ENCODE measurements at regions of chr17 and their contacts with region 1.

Region 1: DNA sequence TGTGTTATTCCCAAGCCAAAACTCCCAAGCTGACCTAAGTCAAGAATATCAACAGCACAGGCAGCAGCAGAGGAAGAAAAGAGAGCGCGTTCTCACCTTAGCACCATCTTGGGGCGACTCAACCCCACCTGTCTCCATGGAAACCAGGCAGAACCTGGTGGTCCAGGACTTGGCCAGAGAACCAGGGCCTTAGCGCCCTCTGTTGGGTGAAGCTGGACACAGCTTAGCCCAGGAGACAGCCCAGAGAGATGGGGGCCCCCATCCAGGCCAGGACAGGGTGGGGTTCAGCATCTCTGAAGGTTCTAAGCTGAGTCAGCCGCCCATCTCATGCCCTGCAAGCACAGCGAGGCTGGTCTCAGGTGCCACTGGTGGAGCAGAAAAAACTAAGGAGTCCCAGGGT is 60.1 kb upstream of the TMEM132E start:
- DNase-seq: peak; percentile 25 to 85
- H3K4me3 ChIP-seq: no peak overlapping the region
- H3K27ac ChIP-seq: no peak overlapping the region
- H3K4me1 ChIP-seq: 0 out of 7 replicates have a peak, but pooled peaks cover 0 to 4% (median 0%) of the 10 kb centered on the region in 4 experiments
- H3K27me3 ChIP-seq: no peaks in the 10 kb centered on the region; a peak in 1 of 7 replicates
- CTCF ChIP-seq: peak; percentile 83 to 94 (median 92)
- EP300 ChIP-seq: no peak
- POLR2A ChIP-seq: no peak
- RAD21 ChIP-seq: peak; percentile 86 to 94

Region 2: GRCh38 chr17:34420254-34420766 is 99.0 kb before region 1 on chr17:
- CTCF ChIA-PET with region 1: interaction called, 26 read pairs
- POLR2A ChIA-PET with region 1: no interaction called
- DNase-seq: peak; percentile 59 to 88
- H3K4me3 ChIP-seq: no peak overlapping the region
- H3K27ac ChIP-seq: no peak overlapping the region
- H3K4me1 ChIP-seq: peaks cover 0 to 10% (median 4%) of the 10 kb centered on the region in 4 experiments; a peak in 4 of 7 replicates
- H3K27me3 ChIP-seq: no peaks in the 10 kb centered on the region; a peak in 1 of 7 replicates
- CTCF ChIP-seq: peak; percentile 65 to 93 (median 92)
- EP300 ChIP-seq: no peak
- POLR2A ChIP-seq: no peak
- RAD21 ChIP-seq: peak; percentile 97 to 98

Region 3: GRCh38 chr17:34474706-34475105 is 44.6 kb before region 1 on chr17:
- CTCF ChIA-PET with region 1: interaction called, 11 read pairs
- POLR2A ChIA-PET with region 1: no interaction called
- DNase-seq: no peak
- H3K4me3 ChIP-seq: no peak overlapping the region
- H3K27ac ChIP-seq: no peak overlapping the region
- H3K4me1 ChIP-seq: no peaks in the 10 kb centered on the region; a peak in 1 of 7 replicates
- H3K27me3 ChIP-seq: no peaks in the 10 kb centered on the region
- CTCF ChIP-seq: peak; percentile 41 to 49 (median 48)
- EP300 ChIP-seq: no peak
- POLR2A ChIP-seq: no peak
- RAD21 ChIP-seq: peak; percentile 25 to 48; a peak in 3 of 4 replicates

Region 4: DNA sequence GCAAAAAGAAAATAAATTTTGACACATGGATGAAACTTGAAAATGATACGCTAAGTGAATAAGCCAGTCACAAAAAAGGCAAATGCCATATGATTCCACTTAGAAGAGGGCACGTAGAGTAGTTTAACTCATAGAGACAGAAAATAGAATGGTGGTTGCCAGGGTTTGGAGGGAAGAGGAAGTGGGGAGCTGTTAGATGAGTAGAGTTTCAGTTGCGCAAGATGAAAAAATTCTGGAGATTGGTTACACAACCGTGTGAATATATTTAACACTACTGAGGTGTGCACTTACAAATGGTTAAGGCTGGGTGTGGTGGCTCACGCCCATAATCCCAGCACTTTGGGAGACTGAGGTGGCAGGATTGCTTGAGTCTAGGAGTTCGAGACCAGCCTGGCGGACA is 33.3 kb before region 1 on chr17:
- CTCF ChIA-PET with region 1: interaction called, 11 read pairs
- POLR2A ChIA-PET with region 1: interaction called, 3 read pairs
- DNase-seq: no peak
- H3K4me3 ChIP-seq: no peak overlapping the region
- H3K27ac ChIP-seq: no peak overlapping the region
- H3K4me1 ChIP-seq: peaks cover 0 to 2% (median 0%) of the 10 kb centered on the region in 4 experiments; a peak in 1 of 7 replicates
- H3K27me3 ChIP-seq: no peaks in the 10 kb centered on the region; a peak in 2 of 7 replicates
- CTCF ChIP-seq: no peak
- EP300 ChIP-seq: no peak
- POLR2A ChIP-seq: no peak
- RAD21 ChIP-seq: no peak

Region 5: GRCh38 chr17:34493917-34494316 is 25.4 kb before region 1 on chr17:
- CTCF ChIA-PET with region 1: interaction called, 10 read pairs
- POLR2A ChIA-PET with region 1: no interaction called
- DNase-seq: no peak
- H3K4me3 ChIP-seq: no peak overlapping the region
- H3K27ac ChIP-seq: no peak overlapping the region
- H3K4me1 ChIP-seq: no peaks in the 10 kb centered on the region
- H3K27me3 ChIP-seq: no peaks in the 10 kb centered on the region; a peak in 2 of 7 replicates
- CTCF ChIP-seq: no peak
- EP300 ChIP-seq: no peak
- POLR2A ChIP-seq: no peak
- RAD21 ChIP-seq: no peak

Region 6: DNA sequence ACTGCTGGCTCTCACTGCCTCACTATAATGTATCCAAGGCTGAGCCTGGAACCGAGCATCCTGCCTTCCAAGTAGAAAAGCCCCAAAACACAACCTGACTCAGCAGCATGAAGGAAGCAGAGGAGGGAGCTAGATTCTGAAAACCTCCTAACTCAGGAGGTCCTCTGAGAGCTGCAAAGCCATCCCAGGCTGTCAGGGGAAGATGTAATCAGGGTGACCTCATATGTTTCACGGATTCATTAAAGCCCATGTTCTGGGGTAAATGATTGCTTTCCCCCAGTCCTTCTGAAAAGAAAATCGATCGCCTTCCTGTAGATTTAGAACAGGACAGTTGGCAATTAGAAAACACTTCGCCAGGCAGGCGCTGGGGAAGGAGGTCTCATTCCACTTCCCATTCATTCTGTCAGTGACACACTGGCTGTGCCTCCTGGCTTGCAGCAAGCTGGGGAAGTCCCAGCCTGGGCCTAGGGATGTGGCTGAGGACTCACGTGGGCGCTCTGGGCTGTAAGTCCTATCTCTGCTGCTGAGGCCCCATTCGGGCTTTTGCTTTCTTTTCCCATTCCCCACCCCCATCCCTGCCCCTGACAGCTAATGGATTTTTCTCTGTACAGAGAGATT is 15.6 kb before region 1 on chr17:
- CTCF ChIA-PET with region 1: interaction called, 12 read pairs
- POLR2A ChIA-PET with region 1: no interaction called
- DNase-seq: no peak
- H3K4me3 ChIP-seq: no peak overlapping the region
- H3K27ac ChIP-seq: no peak overlapping the region
- H3K4me1 ChIP-seq: no peaks in the 10 kb centered on the region
- H3K27me3 ChIP-seq: peaks cover 0 to 15% (median 1%) of the 10 kb centered on the region in 4 experiments; a peak in 3 of 7 replicates
- CTCF ChIP-seq: no peak
- EP300 ChIP-seq: no peak
- POLR2A ChIP-seq: no peak
- RAD21 ChIP-seq: no peak

Measured in H1 (cell line).